ENCODE measurements at regions of chr1 and their contacts with region 1.

Region 1: GRCh38 chr1:241847796-241848685 is at the start of gene EXO1:
- DNase-seq: peak; percentile 31 to 92
- H3K4me3 ChIP-seq: peak within 1 kb of the TSS; percentile 89 to 94
- H3K27ac ChIP-seq: peak within 1 kb of the TSS; percentile 97 to 99
- H3K4me1 ChIP-seq: peaks cover 0 to 8% of the 10 kb centered on the region in 2 donors
- H3K27me3 ChIP-seq: no peaks in the 10 kb centered on the region
- CTCF ChIP-seq: peak in 2 of 3 experiments; percentile 7 to 18
- total RNA-seq, gene EXO1: not detected

Region 2: GRCh38 chr1:241519308-241520079 is 328.5 kb before region 1 on chr1 and contains the start of gene FH:
- intact Hi-C with region 1: loop called (anchors 1 kb)
- DNase-seq: peak; percentile 91 to 98
- H3K4me3 ChIP-seq: peak within 1 kb of the TSS; percentile 81 to 99
- H3K27ac ChIP-seq: peak within 1 kb of the TSS; percentile 92 to 95
- H3K4me1 ChIP-seq: peaks cover 0 to 3% of the 10 kb centered on the region in 2 donors
- H3K27me3 ChIP-seq: no peaks in the 10 kb centered on the region
- CTCF ChIP-seq: no peak
- total RNA-seq, gene FH: 29.9 TPM

Measured in ascending aorta (tissue), 2 donors.